Mammary epithelial cell (primary cell): ENCODE measurements at regions of chr10 and their contacts with region 1.

Region 1: GRCh38 chr10:111116762-111117445 is 40.1 kb downstream of the ADRA2A start:
- DNase-seq: no peak
- H3K4me3 ChIP-seq: no peak overlapping the region
- H3K27ac ChIP-seq: no peak overlapping the region
- H3K4me1 ChIP-seq: no peaks in the 10 kb centered on the region
- H3K27me3 ChIP-seq: no peaks in the 10 kb centered on the region
- CTCF ChIP-seq: no peak

Region 2: DNA sequence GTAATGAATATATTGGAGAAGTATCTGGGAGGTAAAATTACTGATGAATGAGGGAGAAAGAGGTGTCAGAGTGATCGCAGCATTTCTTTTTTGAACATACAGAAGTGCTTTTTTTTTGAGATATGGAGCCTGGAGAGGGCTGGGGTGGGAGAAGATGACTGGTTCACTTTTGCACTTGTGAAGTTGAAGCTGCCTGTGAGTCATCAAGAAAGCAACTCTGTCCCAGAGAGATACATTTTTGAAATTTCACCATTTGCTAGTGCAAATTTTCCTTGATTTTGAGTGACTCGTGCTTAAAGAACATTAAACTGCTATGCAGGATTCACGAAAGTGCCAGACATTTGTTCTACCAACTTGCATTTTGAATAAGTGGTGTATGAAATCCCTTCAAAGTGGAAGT is 41.7 kb after region 1 on chr10:
- CTCF ChIA-PET with region 1: no interaction called
- dilution Hi-C with region 1: loop called (anchors 5 kb)
- in situ Hi-C with region 1: no loop called
- intact Hi-C with region 1: no loop called
- DNase-seq: no peak
- H3K4me3 ChIP-seq: no peak overlapping the region
- H3K27ac ChIP-seq: no peak overlapping the region
- H3K4me1 ChIP-seq: no peaks in the 10 kb centered on the region
- H3K27me3 ChIP-seq: no peaks in the 10 kb centered on the region
- CTCF ChIP-seq: no peak